ENCODE measurements at regions of chr4 and their contacts with region 1.

Region 1: GRCh38 chr4:122758033-122758432 is 25.5 kb downstream of the BBS12 start:
- DNase-seq: no peak

Region 2: GRCh38 chr4:122576261-122577188 is 181.5 kb before region 1 on chr4:
- intact Hi-C with region 1: no loop called
- DNase-seq: peak in 1 of 10 donors; percentile 44

Region 3: GRCh38 chr4:122716825-122717448 is 41.1 kb before region 1 on chr4:
- intact Hi-C with region 1: loop called (anchors 2 kb)
- DNase-seq: peak in 7 of 10 donors; percentile 37 to 89 (median 52)

Region 4: GRCh38 chr4:122930862-122931261 is 172.8 kb after region 1 on chr4:
- intact Hi-C with region 1: loop called (anchors 1 kb)
- DNase-seq: no peak